ENCODE measurements at regions of chr7 and their contacts with region 1.

Region 1: GRCh38 chr7:131513245-131514061 is 43.0 kb downstream of the PODXL start:
- DNase-seq: peak; percentile 74 to 94
- H3K4me3 ChIP-seq: no peak overlapping the region
- H3K27ac ChIP-seq: peak overlapping the region; percentile 25; the same call in 1 of the 2 replicates
- H3K4me1 ChIP-seq: peaks cover 0 to 8% (median 3%) of the 10 kb centered on the region in 4 experiments; a peak in 5 of 7 replicates
- H3K27me3 ChIP-seq: no peaks in the 10 kb centered on the region
- CTCF ChIP-seq: peak; percentile 83 to 100 (median 99)
- EP300 ChIP-seq: no peak
- POLR2A ChIP-seq: peak in 1 of 2 experiments; percentile 61; a peak in 1 of 3 replicates
- RAD21 ChIP-seq: peak; percentile 68 to 73

Region 2: DNA sequence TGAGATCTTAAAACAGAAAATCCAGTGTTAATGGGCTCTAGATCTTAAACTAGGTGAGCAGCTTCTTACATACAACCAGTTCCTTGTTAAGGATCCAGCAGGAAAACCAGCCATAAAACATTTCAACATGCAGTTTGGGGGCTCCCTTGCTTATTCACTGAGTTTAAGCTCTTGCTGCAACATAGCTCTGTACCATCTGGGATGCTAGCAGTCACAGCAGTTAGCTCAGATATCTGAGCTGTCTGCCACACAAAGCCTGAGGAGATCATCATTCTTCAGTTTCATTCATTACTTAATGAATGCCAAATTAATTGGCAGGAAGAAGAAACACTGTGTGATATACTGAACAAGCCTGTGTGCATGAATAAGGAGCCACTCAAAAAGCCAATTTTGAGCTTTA is 19.9 kb before region 1 on chr7:
- CTCF ChIA-PET with region 1: interaction called, 22 read pairs
- POLR2A ChIA-PET with region 1: interaction called, 4 read pairs
- DNase-seq: no peak
- H3K4me3 ChIP-seq: no peak overlapping the region
- H3K27ac ChIP-seq: no peak overlapping the region
- H3K4me1 ChIP-seq: peaks cover 0 to 5% (median 0%) of the 10 kb centered on the region in 4 experiments; a peak in 1 of 7 replicates
- H3K27me3 ChIP-seq: no peaks in the 10 kb centered on the region
- CTCF ChIP-seq: no peak
- EP300 ChIP-seq: no peak
- POLR2A ChIP-seq: peak; percentile 20 to 36; a peak in 1 of 3 replicates
- RAD21 ChIP-seq: no peak

Region 3: DNA sequence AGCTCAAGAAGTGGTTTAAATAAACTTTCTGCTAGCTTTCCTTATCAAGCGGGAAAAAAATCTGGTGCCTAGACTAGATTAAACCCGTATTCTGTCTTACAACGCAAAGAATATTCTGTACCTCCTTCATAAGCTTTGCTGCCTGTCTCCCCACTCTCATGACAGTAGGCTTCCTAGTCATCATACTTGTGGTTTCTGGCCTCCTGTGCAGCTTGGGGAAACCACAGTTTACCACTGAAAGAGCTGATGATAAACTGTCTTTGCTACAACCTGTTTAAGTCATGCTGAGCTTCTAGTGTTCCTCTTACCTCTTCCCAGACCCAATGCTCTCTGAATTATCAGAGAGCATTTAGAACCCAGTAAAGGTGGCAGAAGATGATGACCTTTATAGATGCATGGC is 12.0 kb before region 1 on chr7:
- CTCF ChIA-PET with region 1: interaction called, 24 read pairs
- POLR2A ChIA-PET with region 1: interaction called, 7 read pairs
- DNase-seq: no peak
- H3K4me3 ChIP-seq: no peak overlapping the region
- H3K27ac ChIP-seq: no peak overlapping the region
- H3K4me1 ChIP-seq: peaks cover 0 to 5% (median 0%) of the 10 kb centered on the region in 4 experiments; a peak in 1 of 7 replicates
- H3K27me3 ChIP-seq: no peaks in the 10 kb centered on the region
- CTCF ChIP-seq: no peak
- EP300 ChIP-seq: no peak
- POLR2A ChIP-seq: no peak
- RAD21 ChIP-seq: no peak

Region 4: DNA sequence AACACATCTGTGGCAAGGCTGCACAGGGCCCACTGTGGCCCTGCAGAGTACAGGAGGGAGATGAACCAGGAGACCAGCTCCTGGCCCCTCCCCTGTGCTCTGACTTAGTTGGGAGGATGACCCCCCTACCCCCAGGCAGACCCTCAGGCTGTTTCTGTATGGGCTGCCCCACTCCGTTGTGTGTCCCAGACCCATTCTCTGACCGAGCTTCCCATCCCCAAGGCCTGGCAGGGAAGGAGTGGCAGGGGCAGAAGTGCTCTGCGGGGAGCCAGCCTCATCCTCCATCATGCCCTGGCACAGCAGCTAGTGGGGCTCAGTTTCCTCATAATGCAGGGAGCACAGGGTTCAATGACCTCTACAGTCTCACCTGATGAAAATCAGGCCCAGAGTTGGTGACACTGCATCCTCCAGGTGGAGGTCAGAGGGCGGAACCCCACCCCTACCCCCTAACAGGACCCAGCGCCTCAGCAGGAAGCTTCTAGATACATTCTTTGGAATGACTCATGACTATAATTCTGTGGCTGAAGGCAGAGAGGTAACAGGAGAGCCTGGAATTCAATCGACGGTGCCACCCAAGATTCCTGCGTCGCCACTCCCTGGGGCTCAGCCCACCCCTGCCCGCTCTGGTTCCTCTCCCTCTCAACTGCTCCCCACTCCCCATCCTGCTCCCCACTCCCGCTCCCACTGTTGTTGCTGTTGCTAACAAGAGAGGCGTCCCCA is 24.8 kb after region 1 on chr7:
- CTCF ChIA-PET with region 1: interaction called, 73 read pairs
- POLR2A ChIA-PET with region 1: interaction called, 4 read pairs
- DNase-seq: no peak
- H3K4me3 ChIP-seq: no peak overlapping the region
- H3K27ac ChIP-seq: peak overlapping the region; percentile 47; the same call in 1 of the 2 replicates
- H3K4me1 ChIP-seq: peaks cover 20 to 67% (median 39%) of the 10 kb centered on the region in 4 experiments
- H3K27me3 ChIP-seq: no peaks in the 10 kb centered on the region
- CTCF ChIP-seq: no peak
- EP300 ChIP-seq: no peak
- POLR2A ChIP-seq: peak in 1 of 2 experiments; percentile 28; a peak in 1 of 3 replicates
- RAD21 ChIP-seq: no peak

Measured in H1 (cell line).